Endothelial cell of umbilical vein (primary cell): ENCODE measurements at regions of chr1 and their contacts with region 1.

Region 1: GRCh38 chr1:236603991-236604904 is at the start of gene HEATR1:
- DNase-seq: peak; percentile 97
- H3K4me3 ChIP-seq: peak within 1 kb of the TSS; percentile 64 to 86 (median 73)
- H3K27ac ChIP-seq: peak within 1 kb of the TSS; percentile 55
- H3K4me1 ChIP-seq: peaks cover 14% of the 10 kb centered on the region
- H3K27me3 ChIP-seq: no peaks in the 10 kb centered on the region
- CTCF ChIP-seq: no peak
- POLR2A ChIP-seq: peak; percentile 88
- total RNA-seq, gene HEATR1: 53.8 and 62.0 TPM in 2 replicates

Region 2: DNA sequence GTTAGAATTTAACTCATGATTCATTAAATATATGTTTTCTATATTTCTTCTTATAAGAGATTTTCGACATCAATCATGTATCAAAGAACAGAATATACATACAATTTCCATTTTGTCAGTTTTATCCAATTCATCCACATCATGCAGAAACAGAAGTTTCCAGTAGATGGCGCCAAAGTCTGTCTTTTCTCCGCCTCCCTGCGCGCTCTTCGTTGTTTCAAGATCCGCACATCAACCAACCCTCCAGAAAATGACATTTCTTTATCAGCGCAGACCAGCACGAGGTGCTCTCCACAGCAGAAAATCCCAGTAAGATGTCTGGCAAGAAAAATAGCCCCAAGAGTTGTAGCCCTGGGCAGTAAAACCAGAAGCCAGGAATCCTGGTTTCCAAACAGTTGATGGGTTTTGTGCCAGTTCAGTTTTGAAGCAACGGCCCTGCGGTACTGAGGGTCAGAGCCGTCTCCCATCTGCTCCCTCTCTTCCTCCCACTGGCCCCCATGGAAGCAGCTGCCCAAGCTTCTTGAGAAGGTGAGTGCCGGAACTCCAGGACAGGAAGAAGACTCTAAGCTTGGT is 500.5 kb before region 1 on chr1:
- CTCF ChIA-PET with region 1: interaction called, 6 read pairs
- POLR2A ChIA-PET with region 1: no interaction called
- dilution Hi-C with region 1: no loop called
- intact Hi-C with region 1: loop called (anchors 2 kb)
- DNase-seq: peak; percentile 73
- H3K4me3 ChIP-seq: no peak overlapping the region
- H3K27ac ChIP-seq: no peak overlapping the region
- H3K4me1 ChIP-seq: no peaks in the 10 kb centered on the region
- H3K27me3 ChIP-seq: no peaks in the 10 kb centered on the region
- CTCF ChIP-seq: peak; percentile 56 to 60
- POLR2A ChIP-seq: no peak

Region 3: DNA sequence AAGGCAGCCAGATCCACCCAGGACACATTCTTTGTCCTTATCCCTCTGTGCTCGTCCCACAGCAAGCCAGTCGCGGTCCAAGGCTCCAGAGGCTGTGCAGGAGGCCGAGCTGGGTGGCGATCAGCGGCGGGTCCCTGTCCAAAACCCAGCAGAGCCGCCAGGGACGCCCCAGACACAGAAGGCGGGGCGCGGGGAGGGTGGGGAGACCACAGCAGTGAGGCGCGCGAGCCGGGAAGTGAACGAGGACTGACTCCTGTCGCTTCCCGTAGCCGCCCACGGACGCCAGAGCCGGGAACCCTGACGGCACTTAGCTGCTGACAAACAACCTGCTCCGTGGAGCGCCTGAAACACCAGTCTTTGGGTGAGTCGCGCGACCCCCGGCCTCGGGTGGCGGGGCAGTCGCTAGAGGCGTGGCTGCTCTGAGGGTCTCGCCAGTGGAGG is 80.5 kb before region 1 on chr1 and contains the start of gene LGALS8:
- CTCF ChIA-PET with region 1: no interaction called
- POLR2A ChIA-PET with region 1: no interaction called
- dilution Hi-C with region 1: no loop called
- intact Hi-C with region 1: loop called (anchors 1 kb)
- DNase-seq: peak; percentile 83
- H3K4me3 ChIP-seq: peak within 1 kb of the TSS; percentile 83 to 95 (median 83)
- H3K27ac ChIP-seq: peak within 1 kb of the TSS; percentile 72
- H3K4me1 ChIP-seq: no peaks in the 10 kb centered on the region
- H3K27me3 ChIP-seq: no peaks in the 10 kb centered on the region
- CTCF ChIP-seq: no peak
- POLR2A ChIP-seq: peak; percentile 5
- total RNA-seq, gene LGALS8: 48.1 and 49.9 TPM in 2 replicates

Region 4: GRCh38 chr1:236774926-236775325 is 170.7 kb after region 1 on chr1:
- CTCF ChIA-PET with region 1: interaction called, 12 read pairs
- POLR2A ChIA-PET with region 1: no interaction called
- dilution Hi-C with region 1: no loop called
- intact Hi-C with region 1: loop called (anchors 1 kb)
- DNase-seq: peak; percentile 61
- H3K4me3 ChIP-seq: no peak overlapping the region
- H3K27ac ChIP-seq: no peak overlapping the region
- H3K4me1 ChIP-seq: no peaks in the 10 kb centered on the region
- H3K27me3 ChIP-seq: peaks cover 5 to 6% of the 10 kb centered on the region in 2 experiments
- CTCF ChIP-seq: peak; percentile 36 to 41
- POLR2A ChIP-seq: no peak

Region 5: DNA sequence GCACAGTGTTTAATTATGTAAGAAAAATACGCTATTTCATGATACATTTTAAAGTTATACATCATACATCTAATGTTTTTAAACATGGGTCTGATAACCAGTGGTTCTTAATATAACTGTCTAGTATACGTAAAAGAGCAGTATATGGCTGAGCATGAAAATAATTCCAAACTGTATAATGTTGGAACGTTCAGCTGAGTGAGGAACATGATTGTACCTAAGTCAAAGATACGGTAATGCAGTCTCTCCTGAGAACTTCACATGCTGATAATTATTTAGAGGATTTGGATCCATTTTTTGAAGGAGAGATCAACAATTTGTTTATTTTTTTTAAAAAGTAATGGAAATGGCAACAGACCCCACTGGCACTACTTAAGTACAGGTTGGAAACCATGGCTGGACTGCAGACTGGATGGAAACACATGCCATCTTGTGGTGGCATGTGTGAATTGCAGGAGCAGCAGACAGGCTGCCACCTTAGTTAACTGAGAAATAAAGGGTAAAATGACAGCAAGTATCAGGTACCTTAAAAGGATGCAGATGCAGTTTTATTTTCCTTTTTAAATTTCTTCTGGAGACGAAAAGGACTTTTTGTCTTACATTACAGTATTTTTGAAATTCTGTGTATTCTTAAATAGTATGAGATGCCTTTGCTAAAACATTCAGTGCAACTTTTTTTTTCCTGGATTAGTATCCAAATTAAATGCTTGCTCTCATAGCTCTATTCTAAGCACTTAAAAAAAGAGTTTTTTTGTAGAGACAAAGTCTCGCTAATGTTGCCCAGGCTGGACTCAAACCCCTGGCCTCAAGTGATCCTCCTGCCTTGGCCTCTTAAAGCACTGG is 264.6 kb after region 1 on chr1:
- CTCF ChIA-PET with region 1: interaction called, 10 read pairs
- POLR2A ChIA-PET with region 1: no interaction called
- dilution Hi-C with region 1: no loop called
- intact Hi-C with region 1: loop called (anchors 1 kb)
- DNase-seq: peak; percentile 69
- H3K4me3 ChIP-seq: no peak overlapping the region
- H3K27ac ChIP-seq: no peak overlapping the region
- H3K4me1 ChIP-seq: no peaks in the 10 kb centered on the region
- H3K27me3 ChIP-seq: no peaks in the 10 kb centered on the region
- CTCF ChIP-seq: peak; percentile 85 to 97
- POLR2A ChIP-seq: no peak

Region 6: DNA sequence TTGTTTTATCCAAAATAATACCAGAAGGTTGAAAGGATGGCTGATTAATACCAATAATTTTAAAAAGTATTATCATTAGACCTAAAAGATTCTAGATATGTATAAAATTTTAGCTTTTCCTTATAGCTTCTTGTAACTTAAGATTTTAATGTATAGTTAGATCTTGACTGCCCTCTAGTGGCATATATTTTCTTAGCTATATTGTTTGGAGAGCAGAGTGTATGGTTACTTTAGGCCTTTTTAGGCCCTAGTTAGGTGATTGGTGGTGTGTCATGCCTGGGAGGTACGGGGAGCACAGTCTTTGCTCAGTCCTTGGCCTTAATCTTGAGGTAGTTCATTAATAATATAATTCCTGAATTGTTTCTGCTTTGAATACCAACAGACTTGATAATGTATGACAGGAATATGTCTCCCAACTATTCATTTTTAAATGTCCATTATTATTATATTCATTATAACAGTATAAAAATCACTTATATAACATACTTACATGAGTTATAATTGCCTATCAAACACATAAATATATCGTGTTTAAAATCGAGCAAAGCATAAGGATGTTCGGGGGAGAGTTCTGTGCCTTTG is 958.1 kb after region 1 on chr1:
- CTCF ChIA-PET with region 1: interaction called, 34 read pairs
- POLR2A ChIA-PET with region 1: no interaction called
- dilution Hi-C with region 1: no loop called
- intact Hi-C with region 1: loop called (anchors 1 kb)
- DNase-seq: peak; percentile 44
- H3K4me3 ChIP-seq: no peak overlapping the region
- H3K27ac ChIP-seq: no peak overlapping the region
- H3K4me1 ChIP-seq: no peaks in the 10 kb centered on the region
- H3K27me3 ChIP-seq: no peaks in the 10 kb centered on the region
- CTCF ChIP-seq: peak; percentile 26 to 43
- POLR2A ChIP-seq: no peak